Activated T-helper 2 cell treated with anti-CD3 and anti-CD28 coated beads, Interferon-gamma antibody, Interleukin-2, Interleukin-4, amounts not matched to agents 10 μg/mL and 5 μg/mL and 100 μg/mL, durations not matched to agents 14 hours and 24 hours and 36 hours (primary cell): ENCODE measurements at regions of chr11 and their contacts with region 1.

Region 1: DNA sequence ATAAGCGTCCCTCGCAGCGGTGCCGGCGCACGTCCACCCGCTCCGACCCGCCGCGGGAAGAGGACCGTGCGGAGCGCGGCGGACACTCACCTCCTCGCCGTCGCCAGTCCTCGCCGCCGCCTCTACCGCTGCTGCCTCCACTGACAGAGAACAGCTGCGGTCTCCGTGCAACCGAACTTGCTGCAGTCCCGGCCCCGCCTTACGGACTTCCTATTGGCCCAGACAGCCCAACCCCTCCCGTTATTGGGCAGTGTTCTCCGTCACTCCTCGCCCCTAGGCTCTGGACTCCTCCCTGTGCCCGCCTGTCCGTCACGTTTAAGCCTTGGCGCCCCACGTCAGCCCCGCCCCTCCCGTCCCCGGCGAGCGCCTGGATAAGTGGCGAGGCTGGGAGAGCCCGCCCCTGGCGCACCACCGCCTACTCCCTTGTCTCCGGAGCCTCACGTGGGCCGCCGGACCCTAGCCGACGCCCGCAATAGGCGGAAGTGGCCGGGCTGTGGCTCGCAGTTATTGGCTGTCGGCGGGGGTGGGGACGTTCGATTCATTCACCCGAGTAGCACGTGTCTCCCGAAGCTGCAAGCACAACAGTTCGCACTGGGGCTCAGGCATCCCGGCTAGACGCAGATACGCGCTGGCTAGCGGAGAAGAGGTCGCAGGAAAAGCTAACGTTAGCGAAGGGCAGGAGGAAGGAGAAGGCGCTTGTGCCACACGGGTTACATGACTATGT is at the start of gene PC:
- DNase-seq: peak; percentile 98
- H3K4me3 Mint-ChIP-seq: peak within 1 kb of the TSS; percentile 78
- H3K27ac Mint-ChIP-seq: peak within 1 kb of the TSS; percentile 93
- H3K4me1 Mint-ChIP-seq: peaks cover 15% of the 10 kb centered on the region
- H3K27me3 Mint-ChIP-seq: peaks cover 3% of the 10 kb centered on the region
- total RNA-seq, gene PC: 15.4 and 18.0 TPM in 2 replicates

Region 2: GRCh38 chr11:66855574-66856495 is 102.6 kb before region 1 on chr11:
- intact Hi-C with region 1: loop called (anchors 2 kb)
- DNase-seq: peak; percentile 88
- H3K4me3 Mint-ChIP-seq: peak overlapping the region; percentile 92
- H3K27ac Mint-ChIP-seq: peak overlapping the region; percentile 82
- H3K4me1 Mint-ChIP-seq: peaks cover 11% of the 10 kb centered on the region
- H3K27me3 Mint-ChIP-seq: no peaks in the 10 kb centered on the region